ENCODE measurements at regions of chr6 and their contacts with region 1.

Region 1: DNA sequence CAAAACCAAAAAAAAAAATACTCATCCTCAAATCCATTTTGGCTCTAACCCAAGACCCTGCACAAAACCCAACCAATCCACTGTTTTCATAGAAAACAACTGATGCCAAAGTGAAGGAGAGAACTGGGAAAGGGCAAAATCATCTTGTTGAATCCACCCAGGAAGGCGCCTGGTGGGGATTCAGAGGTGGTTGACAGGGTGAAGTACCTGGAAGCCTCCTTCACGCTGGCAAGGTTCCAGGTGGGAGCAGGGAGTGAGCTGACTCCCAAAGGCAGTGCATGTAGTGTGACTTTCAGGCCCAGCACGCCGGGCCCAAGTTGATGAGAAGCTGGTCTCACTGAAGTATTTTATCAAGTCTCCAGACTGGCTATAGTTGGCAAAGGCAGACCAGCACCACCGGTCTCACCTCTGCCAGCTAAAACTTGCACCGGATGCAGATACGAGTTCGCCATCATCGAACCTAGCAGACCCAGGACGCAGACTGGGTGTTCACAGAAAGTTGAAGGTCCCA is 16.5 kb downstream of the PPP1R10 start:
- DNase-seq: no peak
- ATAC-seq: no peak
- H3K4me3 Mint-ChIP-seq: no peak overlapping the region
- H3K27ac Mint-ChIP-seq: no peak overlapping the region
- H3K4me1 Mint-ChIP-seq: peaks cover 12% of the 10 kb centered on the region
- H3K27me3 Mint-ChIP-seq: no peaks in the 10 kb centered on the region

Region 2: GRCh38 chr6:30571075-30571768 is 29.3 kb before region 1 on chr6 and contains the start of gene ABCF1:
- CTCF ChIA-PET with region 1: interaction called, 17 read pairs
- DNase-seq: peak; percentile 99
- ATAC-seq: peak; percentile 95
- H3K4me3 Mint-ChIP-seq: peak within 1 kb of the TSS; percentile 89
- H3K27ac Mint-ChIP-seq: peak within 1 kb of the TSS; percentile 94
- H3K4me1 Mint-ChIP-seq: peaks cover 58% of the 10 kb centered on the region
- H3K27me3 Mint-ChIP-seq: no peaks in the 10 kb centered on the region
- total RNA-seq, gene ABCF1: 73.8 to 98.6 TPM

Region 3: DNA sequence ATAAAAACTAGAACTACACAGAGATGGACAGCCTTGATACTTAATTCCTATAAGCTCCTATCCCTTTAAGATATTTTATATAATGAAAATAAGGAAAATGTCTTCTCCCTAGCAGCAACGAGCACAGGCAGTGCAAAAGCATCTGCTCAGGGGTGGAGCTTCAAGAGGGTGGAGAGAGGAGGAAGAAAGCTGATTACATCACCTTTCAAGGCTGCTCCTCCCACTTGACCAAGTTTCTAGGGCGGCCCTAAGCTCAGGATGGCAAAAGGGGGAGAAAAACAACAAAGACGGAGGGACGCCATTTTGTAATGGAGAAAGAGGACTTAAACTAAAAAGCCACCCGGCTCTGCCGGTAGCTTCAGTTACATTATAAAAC is 14.3 kb after region 1 on chr6:
- CTCF ChIA-PET with region 1: interaction called, 40 read pairs
- DNase-seq: peak; percentile 94
- ATAC-seq: peak; percentile 59
- H3K4me3 Mint-ChIP-seq: peak overlapping the region; percentile 97
- H3K27ac Mint-ChIP-seq: peak overlapping the region; percentile 100
- H3K4me1 Mint-ChIP-seq: peaks cover 57% of the 10 kb centered on the region
- H3K27me3 Mint-ChIP-seq: peaks cover 3% of the 10 kb centered on the region

Region 4: DNA sequence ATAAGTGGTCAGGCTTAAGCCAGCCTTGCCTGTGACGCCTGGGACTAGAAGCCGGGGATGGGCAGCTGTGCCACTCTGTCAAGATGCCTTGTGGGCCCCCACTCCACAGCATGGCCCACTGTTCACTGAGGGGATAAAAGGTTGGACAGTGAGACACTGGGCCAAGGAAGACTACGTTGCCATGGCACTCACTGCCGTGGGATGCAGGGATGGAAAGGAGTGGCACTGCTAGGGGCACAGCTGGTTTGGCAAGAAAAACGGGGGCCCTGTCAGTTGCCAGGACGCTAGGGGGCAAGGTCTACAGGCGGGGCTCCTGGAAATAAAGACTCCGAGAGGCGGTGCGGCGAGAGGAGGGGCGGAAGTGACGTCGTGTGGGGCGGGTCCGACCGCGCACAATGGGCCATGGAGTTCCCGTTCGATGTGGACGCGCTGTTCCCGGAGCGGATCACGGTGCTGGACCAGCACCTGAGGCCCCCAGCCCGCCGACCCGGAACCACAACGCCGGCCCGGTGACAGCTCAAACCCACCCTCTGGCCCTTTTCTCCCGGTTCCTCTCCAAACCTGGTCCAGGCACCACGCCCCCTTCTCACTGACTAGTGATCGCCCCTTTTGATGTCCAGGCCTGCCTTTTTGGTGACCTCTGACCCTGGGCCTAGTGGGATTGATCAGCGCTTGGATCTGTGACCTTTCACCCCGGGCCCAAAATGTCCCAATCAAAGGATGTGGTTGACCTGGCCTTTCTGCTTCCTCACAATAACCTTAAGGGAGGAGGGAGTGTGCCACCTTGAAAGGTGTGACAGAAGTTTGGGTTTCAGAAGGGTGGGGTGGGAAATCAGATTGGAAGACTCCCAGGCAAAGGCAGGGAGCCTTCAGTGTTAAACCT is 26.2 kb after region 1 on chr6 and contains the start of gene ATAT1:
- CTCF ChIA-PET with region 1: no interaction called
- DNase-seq: peak; percentile 92
- ATAC-seq: peak; percentile 99
- H3K4me3 Mint-ChIP-seq: peak within 1 kb of the TSS; percentile 90
- H3K27ac Mint-ChIP-seq: peak within 1 kb of the TSS; percentile 97
- H3K4me1 Mint-ChIP-seq: peaks cover 30% of the 10 kb centered on the region
- H3K27me3 Mint-ChIP-seq: no peaks in the 10 kb centered on the region
- total RNA-seq, gene ATAT1: 7.5 to 8.4 TPM